Panc1 (cell line): ENCODE measurements at regions of chr1 and their contacts with region 1.

Region 1: GRCh38 chr1:158675563-158676323 is 10.8 kb downstream of the SPTA1 start:
- DNase-seq: no peak
- ATAC-seq: no peak
- H3K4me3 ChIP-seq: no peak overlapping the region
- H3K27ac ChIP-seq: no peak overlapping the region
- H3K4me1 ChIP-seq: no peaks in the 10 kb centered on the region
- H3K27me3 ChIP-seq: no peaks in the 10 kb centered on the region
- CTCF ChIP-seq: no peak

Region 2: DNA sequence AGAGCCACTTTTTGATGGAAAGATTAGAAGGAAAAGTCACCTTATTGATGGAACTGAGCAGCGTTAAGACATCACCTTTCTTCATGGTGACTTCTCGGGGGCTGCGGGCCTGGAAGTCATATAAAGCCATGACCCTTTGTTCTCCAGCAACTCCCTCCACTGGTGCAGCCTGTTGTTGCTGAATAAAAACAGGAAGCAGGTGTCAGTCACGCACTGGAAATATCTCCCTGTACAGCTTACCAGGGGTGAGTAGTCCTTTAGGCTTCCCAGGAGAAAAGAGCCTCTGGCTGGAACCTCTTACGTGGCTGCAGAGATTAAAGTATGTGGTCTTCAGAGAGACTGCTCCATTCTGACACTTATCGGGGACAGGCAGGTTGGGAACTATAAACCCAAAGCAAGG is 21.2 kb before region 1 on chr1:
- CTCF ChIA-PET with region 1: no interaction called
- POLR2A ChIA-PET with region 1: no interaction called
- in situ Hi-C with region 1: no loop called
- intact Hi-C with region 1: loop called (anchors 1 kb)
- DNase-seq: no peak
- ATAC-seq: no peak
- H3K4me3 ChIP-seq: no peak overlapping the region
- H3K27ac ChIP-seq: no peak overlapping the region
- H3K4me1 ChIP-seq: no peaks in the 10 kb centered on the region
- H3K27me3 ChIP-seq: no peaks in the 10 kb centered on the region; the same call in 1 of the 2 replicates
- CTCF ChIP-seq: no peak

Region 3: GRCh38 chr1:158809862-158810261 is 134.1 kb after region 1 on chr1:
- CTCF ChIA-PET with region 1: no interaction called
- POLR2A ChIA-PET with region 1: no interaction called
- in situ Hi-C with region 1: no loop called
- intact Hi-C with region 1: no loop called
- DNase-seq: no peak
- ATAC-seq: no peak
- H3K4me3 ChIP-seq: no peak overlapping the region
- H3K27ac ChIP-seq: no peak overlapping the region
- H3K4me1 ChIP-seq: no peaks in the 10 kb centered on the region
- H3K27me3 ChIP-seq: no peaks in the 10 kb centered on the region
- CTCF ChIP-seq: no peak